ENCODE measurements at regions of chr3 and their contacts with region 1.

Region 1: GRCh38 chr3:186930641-186931531 is 560 bp downstream of the ST6GAL1 start:
- DNase-seq: peak; percentile 81
- H3K4me3 Mint-ChIP-seq: peak overlapping the region; percentile 88
- H3K27ac Mint-ChIP-seq: peak overlapping the region; percentile 94
- H3K4me1 Mint-ChIP-seq: peaks cover 41% of the 10 kb centered on the region
- H3K27me3 Mint-ChIP-seq: no peaks in the 10 kb centered on the region

Region 2: GRCh38 chr3:186732169-186732766 is 198.6 kb before region 1 on chr3:
- CTCF ChIA-PET with region 1: no interaction called
- POLR2A ChIA-PET with region 1: no interaction called
- DNase-seq: no peak
- H3K4me3 Mint-ChIP-seq: no peak overlapping the region
- H3K27ac Mint-ChIP-seq: no peak overlapping the region
- H3K4me1 Mint-ChIP-seq: no peaks in the 10 kb centered on the region
- H3K27me3 Mint-ChIP-seq: no peaks in the 10 kb centered on the region

Region 3: GRCh38 chr3:186831798-186832197 is 99.1 kb before region 1 on chr3:
- CTCF ChIA-PET with region 1: no interaction called
- POLR2A ChIA-PET with region 1: no interaction called
- DNase-seq: no peak
- H3K4me3 Mint-ChIP-seq: no peak overlapping the region
- H3K27ac Mint-ChIP-seq: no peak overlapping the region
- H3K4me1 Mint-ChIP-seq: peaks cover 8% of the 10 kb centered on the region
- H3K27me3 Mint-ChIP-seq: peaks cover 66% of the 10 kb centered on the region

Region 4: DNA sequence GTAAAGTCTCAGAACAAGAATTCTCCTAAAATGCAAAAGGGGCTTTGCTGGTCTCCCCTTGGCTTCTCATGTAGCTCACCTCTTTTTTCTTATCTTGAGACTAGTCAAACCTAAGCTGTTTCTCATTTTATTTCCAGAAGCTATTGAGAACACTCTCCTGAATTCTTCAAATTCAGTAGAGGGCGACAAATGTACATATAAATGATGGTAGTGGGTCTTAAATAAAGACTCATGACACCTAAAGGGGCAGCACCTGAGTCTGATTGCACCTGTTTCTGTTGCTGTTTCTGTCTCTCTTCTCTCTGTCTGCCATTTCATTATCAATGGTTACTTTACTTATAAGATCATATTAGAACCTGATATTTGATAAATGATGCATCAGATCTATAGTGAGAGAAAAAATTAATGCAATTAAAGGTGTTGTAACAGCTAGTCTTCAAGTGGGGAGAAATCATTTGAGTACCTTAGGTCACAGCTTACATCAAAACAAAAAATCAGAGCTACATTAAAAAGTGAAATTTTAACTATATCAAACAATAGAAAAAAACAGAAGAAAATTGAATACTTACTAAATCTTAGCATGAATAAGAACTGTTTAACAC is 81.4 kb before region 1 on chr3:
- CTCF ChIA-PET with region 1: interaction called, 10 read pairs
- POLR2A ChIA-PET with region 1: interaction called, 10 read pairs
- DNase-seq: peak; percentile 40
- H3K4me3 Mint-ChIP-seq: no peak overlapping the region
- H3K27ac Mint-ChIP-seq: peak overlapping the region; percentile 33
- H3K4me1 Mint-ChIP-seq: peaks cover 23% of the 10 kb centered on the region
- H3K27me3 Mint-ChIP-seq: peaks cover 14% of the 10 kb centered on the region

Region 5: DNA sequence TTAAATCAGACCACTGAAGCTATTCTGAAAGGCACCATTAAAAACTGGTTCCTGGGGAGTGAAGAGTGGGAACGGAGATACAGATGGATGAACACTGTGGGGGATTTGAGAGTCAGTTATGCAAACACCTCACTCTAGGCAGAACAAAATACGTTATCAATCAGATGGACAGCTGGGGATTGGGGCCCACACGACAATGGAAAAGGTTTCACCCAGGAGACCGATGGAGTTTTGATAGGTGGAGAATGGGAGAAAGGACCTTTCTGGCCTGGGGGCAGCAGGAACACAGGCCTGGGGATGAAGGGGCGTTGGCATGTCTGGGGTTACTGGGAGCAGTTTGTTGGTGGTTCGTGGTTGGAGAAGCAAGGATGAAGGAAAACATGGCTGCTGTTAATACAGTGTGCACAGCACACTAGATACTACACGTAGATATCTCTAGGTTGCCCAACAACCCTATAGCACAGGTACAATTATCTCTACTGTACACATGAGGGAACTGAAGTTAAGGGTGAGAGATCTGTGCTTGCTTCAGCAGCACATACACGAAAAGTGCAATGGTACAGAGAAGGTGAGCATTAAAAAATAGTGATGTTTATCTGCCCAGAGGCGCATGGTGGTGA is 16.0 kb after region 1 on chr3:
- CTCF ChIA-PET with region 1: interaction called, 10 read pairs
- POLR2A ChIA-PET with region 1: no interaction called
- DNase-seq: no peak
- H3K4me3 Mint-ChIP-seq: no peak overlapping the region
- H3K27ac Mint-ChIP-seq: no peak overlapping the region
- H3K4me1 Mint-ChIP-seq: peaks cover 37% of the 10 kb centered on the region
- H3K27me3 Mint-ChIP-seq: no peaks in the 10 kb centered on the region

Region 6: GRCh38 chr3:186985661-186986364 is 54.9 kb after region 1 on chr3:
- CTCF ChIA-PET with region 1: no interaction called
- POLR2A ChIA-PET with region 1: no interaction called
- DNase-seq: no peak
- H3K4me3 Mint-ChIP-seq: no peak overlapping the region
- H3K27ac Mint-ChIP-seq: peak overlapping the region; percentile 14
- H3K4me1 Mint-ChIP-seq: peaks cover 13% of the 10 kb centered on the region
- H3K27me3 Mint-ChIP-seq: no peaks in the 10 kb centered on the region

Measured in activated CD4-positive, alpha-beta T cell treated with anti-CD3 and anti-CD28 coated beads, Interleukin-2, amount 10 ng/mL, durations not matched to agents 7 days and 5 days (primary cell).